Activated CD4-positive, alpha-beta memory T cell treated with anti-CD3 and anti-CD28 coated beads for 36 hours (primary cell): ENCODE measurements at regions of chr11 and their contacts with region 1.

Region 1: GRCh38 chr11:95790123-95790932 is at the start of gene CEP57:
- DNase-seq: peak; percentile 97
- H3K4me3 Mint-ChIP-seq: peak within 1 kb of the TSS; percentile 95
- H3K27ac Mint-ChIP-seq: peak within 1 kb of the TSS; percentile 100
- H3K4me1 Mint-ChIP-seq: peaks cover 55% of the 10 kb centered on the region
- H3K27me3 Mint-ChIP-seq: no peaks in the 10 kb centered on the region
- total RNA-seq, gene CEP57: 115 to 117 TPM

Region 2: GRCh38 chr11:94128746-94129511 is 1661.4 kb before region 1 on chr11 and contains the start of gene PANX1:
- CTCF ChIA-PET with region 1: no interaction called
- POLR2A ChIA-PET with region 1: no interaction called
- intact Hi-C with region 1: loop called (anchors 2 kb)
- DNase-seq: peak; percentile 82
- H3K4me3 Mint-ChIP-seq: no peak within 1 kb of the TSS
- H3K27ac Mint-ChIP-seq: peak within 1 kb of the TSS; percentile 90
- H3K4me1 Mint-ChIP-seq: peaks cover 28% of the 10 kb centered on the region
- H3K27me3 Mint-ChIP-seq: no peaks in the 10 kb centered on the region
- total RNA-seq, gene PANX1: 11.4 to 11.7 TPM

Region 3: DNA sequence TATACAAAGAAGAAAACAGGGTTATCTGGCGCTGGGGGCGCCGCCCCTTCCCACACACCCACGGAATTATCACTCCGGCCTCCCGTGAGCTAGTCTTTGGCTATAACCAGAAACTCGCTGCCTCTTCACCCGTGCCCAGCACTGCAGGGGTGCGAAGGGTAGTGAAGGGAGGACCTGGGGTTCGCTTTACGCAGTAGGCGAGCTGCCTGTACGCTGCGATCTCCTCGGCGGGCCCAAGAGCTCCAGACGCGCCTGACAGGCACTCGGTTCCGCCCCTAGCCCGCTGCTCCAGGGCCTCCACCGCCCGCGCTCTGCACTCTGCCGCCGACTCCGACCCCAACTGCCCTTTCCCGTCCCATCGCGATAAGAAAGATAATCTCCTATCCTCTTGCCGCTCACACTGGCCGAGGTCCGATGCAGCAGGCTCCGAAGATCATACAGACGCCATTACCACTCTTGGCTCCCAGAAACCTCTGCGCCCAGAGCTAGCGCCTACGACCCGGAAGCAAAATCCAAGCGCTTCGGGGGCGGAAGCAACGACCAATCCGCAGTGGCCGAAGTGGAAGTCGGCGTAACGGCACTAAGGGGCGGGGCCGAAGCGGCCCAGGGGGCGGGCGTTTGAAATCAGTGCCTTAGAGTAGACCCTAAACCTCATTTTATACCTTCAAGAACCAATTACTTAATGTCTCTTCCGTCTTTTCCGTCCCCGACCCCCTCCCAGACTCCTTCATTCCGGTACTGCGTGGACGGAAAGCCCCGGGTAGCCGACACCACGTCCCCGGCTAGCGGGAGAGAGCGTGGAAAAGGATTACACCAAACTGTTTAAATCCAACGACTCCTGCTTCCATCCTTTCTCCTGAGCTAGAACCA is 817.0 kb before region 1 on chr11 and contains the starts of genes CWC15 and KDM4D:
- CTCF ChIA-PET with region 1: no interaction called
- POLR2A ChIA-PET with region 1: no interaction called
- intact Hi-C with region 1: loop called (anchors 2 kb)
- DNase-seq: peak; percentile 97
- H3K4me3 Mint-ChIP-seq: peak within 1 kb of the TSS; percentile 99
- H3K27ac Mint-ChIP-seq: peak within 1 kb of the TSS; percentile 86
- H3K4me1 Mint-ChIP-seq: peaks cover 34% of the 10 kb centered on the region
- H3K27me3 Mint-ChIP-seq: no peaks in the 10 kb centered on the region
- total RNA-seq, gene CWC15: 65.9 to 67.1 TPM
- total RNA-seq, gene KDM4D: 1.4 to 1.6 TPM

Region 4: GRCh38 chr11:95089620-95090542 is 700.4 kb before region 1 on chr11 and contains the start of gene ENDOD1:
- CTCF ChIA-PET with region 1: no interaction called
- POLR2A ChIA-PET with region 1: interaction called, 3 read pairs
- intact Hi-C with region 1: loop called (anchors 1 kb)
- DNase-seq: peak; percentile 90
- H3K4me3 Mint-ChIP-seq: peak within 1 kb of the TSS; percentile 87
- H3K27ac Mint-ChIP-seq: peak within 1 kb of the TSS; percentile 92
- H3K4me1 Mint-ChIP-seq: peaks cover 68% of the 10 kb centered on the region
- H3K27me3 Mint-ChIP-seq: no peaks in the 10 kb centered on the region
- total RNA-seq, gene ENDOD1: 25.9 TPM

Region 5: GRCh38 chr11:95364324-95365295 is 425.7 kb before region 1 on chr11:
- CTCF ChIA-PET with region 1: no interaction called
- POLR2A ChIA-PET with region 1: no interaction called
- intact Hi-C with region 1: no loop called
- DNase-seq: no peak
- H3K4me3 Mint-ChIP-seq: no peak overlapping the region
- H3K27ac Mint-ChIP-seq: no peak overlapping the region
- H3K4me1 Mint-ChIP-seq: no peaks in the 10 kb centered on the region
- H3K27me3 Mint-ChIP-seq: no peaks in the 10 kb centered on the region

Region 6: GRCh38 chr11:95853862-95854261 is 63.5 kb after region 1 on chr11:
- CTCF ChIA-PET with region 1: no interaction called
- POLR2A ChIA-PET with region 1: no interaction called
- intact Hi-C with region 1: no loop called
- DNase-seq: no peak
- H3K4me3 Mint-ChIP-seq: no peak overlapping the region
- H3K27ac Mint-ChIP-seq: no peak overlapping the region
- H3K4me1 Mint-ChIP-seq: no peaks in the 10 kb centered on the region
- H3K27me3 Mint-ChIP-seq: no peaks in the 10 kb centered on the region

Region 7: GRCh38 chr11:95923728-95924413 is 133.5 kb after region 1 on chr11 and contains the start of gene MTMR2:
- CTCF ChIA-PET with region 1: no interaction called
- POLR2A ChIA-PET with region 1: interaction called, 3 read pairs
- intact Hi-C with region 1: loop called (anchors 5 kb)
- DNase-seq: peak; percentile 72
- H3K4me3 Mint-ChIP-seq: peak within 1 kb of the TSS; percentile 100
- H3K27ac Mint-ChIP-seq: peak within 1 kb of the TSS; percentile 99
- H3K4me1 Mint-ChIP-seq: peaks cover 30% of the 10 kb centered on the region
- H3K27me3 Mint-ChIP-seq: no peaks in the 10 kb centered on the region
- total RNA-seq, gene MTMR2: 36.9 to 37.8 TPM

Region 8: DNA sequence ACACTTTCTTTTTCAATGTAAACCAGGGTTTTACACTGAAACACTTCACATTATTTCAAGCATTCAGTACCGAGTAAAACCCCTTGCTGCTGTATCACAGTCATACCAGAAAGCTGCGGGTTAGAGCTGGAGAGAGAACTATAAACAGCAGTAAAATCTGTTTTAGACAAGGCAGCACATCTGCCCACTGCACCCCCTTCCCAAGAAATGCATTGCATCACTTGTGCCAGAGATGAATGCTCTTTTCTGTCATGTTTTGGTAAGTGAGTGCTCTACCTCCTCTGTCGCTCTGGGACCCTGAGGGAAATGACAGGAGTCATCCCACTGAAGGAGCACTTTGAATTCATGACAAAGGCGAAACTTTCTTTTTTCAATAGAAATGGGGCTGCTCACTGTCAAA is 445.4 kb after region 1 on chr11:
- CTCF ChIA-PET with region 1: no interaction called
- POLR2A ChIA-PET with region 1: no interaction called
- intact Hi-C with region 1: loop called (anchors 1 kb)
- DNase-seq: peak; percentile 90
- H3K4me3 Mint-ChIP-seq: peak overlapping the region; percentile 58
- H3K27ac Mint-ChIP-seq: peak overlapping the region; percentile 94
- H3K4me1 Mint-ChIP-seq: peaks cover 50% of the 10 kb centered on the region
- H3K27me3 Mint-ChIP-seq: no peaks in the 10 kb centered on the region